ENCODE measurements at regions of chr2 and their contacts with region 1.

Region 1: GRCh38 chr2:220779931-220780330 is 792.2 kb downstream of the EPHA4 start:
- DNase-seq: peak; percentile 87
- ATAC-seq: peak; percentile 50
- H3K4me3 ChIP-seq: peak overlapping the region; percentile 4; the same call in 1 of the 2 replicates
- H3K27ac ChIP-seq: 0 out of 2 replicates have a peak overlapping the region, but pooled peaks have one; percentile 2
- H3K4me1 ChIP-seq: peaks cover 24% of the 10 kb centered on the region
- H3K27me3 ChIP-seq: no peaks in the 10 kb centered on the region
- CTCF ChIP-seq: no peak

Region 2: DNA sequence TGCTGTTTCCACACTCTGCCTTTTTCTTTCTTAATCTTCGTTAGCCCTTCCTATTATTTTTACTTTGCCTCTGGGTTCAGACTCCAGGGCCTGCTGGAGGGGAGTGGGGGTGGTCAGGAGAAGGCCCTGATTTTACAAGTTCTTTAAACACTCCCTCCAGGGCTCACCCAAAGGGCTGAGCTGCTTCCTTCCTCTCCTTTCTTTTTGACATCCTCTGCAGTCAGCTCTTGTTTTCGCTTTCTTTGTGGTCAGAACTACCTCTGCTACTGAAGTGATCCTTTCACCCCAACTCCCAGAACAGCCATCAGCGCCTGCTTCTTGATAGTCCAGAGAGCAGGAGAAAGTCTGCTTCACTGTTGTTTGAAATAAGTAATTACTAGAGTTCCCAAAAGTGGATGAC is 133.5 kb before region 1 on chr2:
- CTCF ChIA-PET with region 1: no interaction called
- POLR2A ChIA-PET with region 1: no interaction called
- intact Hi-C with region 1: no loop called
- DNase-seq: no peak
- ATAC-seq: no peak
- H3K4me3 ChIP-seq: no peak overlapping the region
- H3K27ac ChIP-seq: no peak overlapping the region
- H3K4me1 ChIP-seq: no peaks in the 10 kb centered on the region
- H3K27me3 ChIP-seq: no peaks in the 10 kb centered on the region
- CTCF ChIP-seq: no peak

Region 3: DNA sequence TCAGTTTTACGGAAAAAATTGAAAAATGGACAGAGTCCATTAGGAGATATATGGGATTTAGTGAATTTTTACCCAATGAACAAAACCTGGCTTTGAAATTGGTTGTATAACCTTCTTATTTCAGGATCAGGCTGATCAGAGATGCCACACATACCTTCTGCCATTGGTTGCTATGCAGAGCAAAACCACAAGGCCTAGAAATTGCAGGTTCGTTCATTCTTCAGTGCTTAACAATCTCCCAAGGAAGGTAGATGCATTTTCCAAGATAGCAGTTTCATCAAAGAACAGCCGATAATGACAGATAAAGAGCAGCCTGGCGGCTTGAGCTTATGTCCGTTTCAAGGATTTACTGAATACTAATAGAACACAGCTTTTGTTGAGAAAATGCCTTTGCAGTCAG is 76.7 kb before region 1 on chr2:
- CTCF ChIA-PET with region 1: no interaction called
- POLR2A ChIA-PET with region 1: no interaction called
- intact Hi-C with region 1: loop called (anchors 5 kb)
- DNase-seq: no peak
- ATAC-seq: no peak
- H3K4me3 ChIP-seq: no peak overlapping the region
- H3K27ac ChIP-seq: no peak overlapping the region
- H3K4me1 ChIP-seq: peaks cover 4% of the 10 kb centered on the region; the same call in 1 of the 2 replicates
- H3K27me3 ChIP-seq: no peaks in the 10 kb centered on the region
- CTCF ChIP-seq: no peak

Measured in PC-3 (cell line).